Aorta (tissue), 5 donors: ENCODE measurements at regions of chr2 and their contacts with region 1.

Region 1: GRCh38 chr2:118046634-118047210 is 32.9 kb upstream of the CCDC93 start:
- DNase-seq: no peak
- ATAC-seq: no peak
- H3K4me3 ChIP-seq: no peak overlapping the region
- H3K27ac ChIP-seq: no peak overlapping the region
- H3K4me1 ChIP-seq: no peaks in the 10 kb centered on the region
- H3K27me3 ChIP-seq: no peaks in the 10 kb centered on the region

Region 2: GRCh38 chr2:118202707-118203303 is 156.1 kb after region 1 on chr2:
- intact Hi-C with region 1: loop called in 1 of 2 experiments (anchors 5 kb)
- DNase-seq: no peak
- ATAC-seq: no peak
- H3K4me3 ChIP-seq: no peak overlapping the region
- H3K27ac ChIP-seq: no peak overlapping the region
- H3K4me1 ChIP-seq: no peaks in the 10 kb centered on the region
- H3K27me3 ChIP-seq: peaks cover 0 to 2% of the 10 kb centered on the region in 2 donors

Region 3: DNA sequence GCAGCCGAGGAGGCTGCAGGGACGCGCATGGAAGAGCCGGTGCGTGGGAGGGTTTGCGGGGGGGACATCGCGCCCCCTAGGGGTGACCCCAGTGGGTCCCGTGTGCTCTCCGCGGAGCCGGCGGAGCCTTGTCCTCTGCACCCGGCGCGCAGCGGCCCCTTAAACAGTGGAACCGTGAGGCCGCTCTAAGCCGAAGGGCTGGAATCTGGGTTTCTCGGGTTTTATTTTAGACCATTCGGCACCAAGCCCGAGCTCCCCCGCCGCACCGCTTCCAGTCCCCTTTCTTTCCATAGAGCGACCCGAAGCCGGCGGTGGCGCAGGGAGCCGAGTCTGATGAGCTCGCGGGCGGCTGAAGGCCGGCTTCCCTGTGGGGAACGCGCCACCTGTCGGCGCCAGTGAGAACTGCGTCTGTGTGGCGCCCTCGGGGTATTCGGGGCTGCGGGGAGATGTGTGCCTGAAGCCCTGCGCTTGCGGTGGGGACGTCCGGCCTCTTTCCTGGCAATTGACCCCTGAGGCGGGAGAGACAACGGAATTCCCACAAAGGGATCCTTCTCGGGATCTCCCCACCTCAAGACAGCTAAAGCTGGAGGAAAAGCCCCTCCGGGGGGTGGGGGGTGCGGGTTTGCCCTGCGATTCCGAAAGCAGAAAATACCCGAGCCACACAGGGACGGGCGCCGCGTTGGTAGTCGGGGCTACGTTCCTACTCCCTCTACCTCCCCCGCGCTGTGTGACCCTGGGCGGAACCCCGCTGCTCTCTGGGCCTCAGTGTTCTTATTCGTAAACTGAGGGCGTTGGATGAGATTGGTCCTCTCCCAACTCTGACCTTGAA is 808.9 kb after region 1 on chr2:
- intact Hi-C with region 1: loop called (anchors 5 kb)
- DNase-seq: peak; percentile 83 to 95
- ATAC-seq: peak; percentile 85
- H3K4me3 ChIP-seq: no peak overlapping the region
- H3K27ac ChIP-seq: no peak overlapping the region
- H3K4me1 ChIP-seq: no peaks in the 10 kb centered on the region
- H3K27me3 ChIP-seq: no peaks in the 10 kb centered on the region

Region 4: DNA sequence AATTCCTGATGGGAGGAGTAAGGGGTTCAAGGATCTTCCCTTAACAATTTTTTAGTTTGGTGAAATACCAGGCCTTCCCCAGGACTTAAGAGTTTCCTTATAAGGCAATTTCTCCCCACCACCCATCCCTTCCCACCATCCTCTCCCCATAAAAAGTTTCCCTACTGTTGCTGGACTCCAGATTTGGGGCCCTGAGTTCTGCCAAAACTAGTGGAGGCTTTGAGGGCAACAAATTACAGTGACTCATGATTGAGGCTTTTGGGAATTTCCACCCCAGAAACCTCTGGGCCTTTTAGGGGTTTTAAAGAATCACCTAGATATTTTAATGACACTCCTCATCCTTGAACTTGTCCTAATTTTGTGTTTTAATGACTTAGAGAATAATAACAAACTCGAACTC is 815.0 kb after region 1 on chr2:
- intact Hi-C with region 1: loop called (anchors 5 kb)
- DNase-seq: no peak
- ATAC-seq: no peak
- H3K4me3 ChIP-seq: no peak overlapping the region
- H3K27ac ChIP-seq: no peak overlapping the region
- H3K4me1 ChIP-seq: no peaks in the 10 kb centered on the region
- H3K27me3 ChIP-seq: no peaks in the 10 kb centered on the region